ENCODE measurements at regions of chr1 and their contacts with region 1.

Region 1: GRCh38 chr1:64553281-64553680 is 83.4 kb downstream of the CACHD1 start:
- DNase-seq: peak; percentile 5
- ATAC-seq: no peak
- H3K4me3 ChIP-seq: no peak overlapping the region
- H3K27ac ChIP-seq: no peak overlapping the region
- H3K4me1 ChIP-seq: no peaks in the 10 kb centered on the region
- H3K27me3 ChIP-seq: peaks cover 0 to 6% of the 10 kb centered on the region in 2 experiments; a peak in 2 of 5 replicates
- CTCF ChIP-seq: peak; percentile 30
- EP300 ChIP-seq: no peak
- POLR2A ChIP-seq: no peak
- RAD21 ChIP-seq: no peak

Region 2: DNA sequence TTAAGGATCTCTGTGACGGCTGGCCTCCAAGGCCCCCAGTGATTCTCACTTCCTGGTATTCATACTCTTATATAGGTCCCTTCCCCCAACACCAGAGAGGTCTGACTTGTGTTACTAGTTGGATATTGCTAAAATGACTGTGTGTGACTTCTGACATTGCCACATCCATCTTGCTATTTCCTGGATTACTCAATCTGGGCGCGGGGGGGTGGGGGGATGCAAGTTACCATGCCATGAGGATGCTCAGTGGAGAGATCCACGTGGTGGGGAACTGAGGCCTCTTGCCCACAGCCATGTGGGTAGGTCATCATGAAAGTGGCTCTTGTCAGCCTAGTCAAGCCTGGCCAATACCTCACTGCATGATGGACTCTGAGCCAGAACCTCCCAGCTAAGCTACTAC is 232.8 kb before region 1 on chr1:
- CTCF ChIA-PET with region 1: no interaction called
- POLR2A ChIA-PET with region 1: no interaction called
- in situ Hi-C with region 1: no loop called
- intact Hi-C with region 1: no loop called
- DNase-seq: no peak
- ATAC-seq: no peak
- H3K4me3 ChIP-seq: no peak overlapping the region
- H3K27ac ChIP-seq: no peak overlapping the region
- H3K4me1 ChIP-seq: no peaks in the 10 kb centered on the region
- H3K27me3 ChIP-seq: no peaks in the 10 kb centered on the region
- CTCF ChIP-seq: no peak
- EP300 ChIP-seq: no peak
- POLR2A ChIP-seq: no peak
- RAD21 ChIP-seq: no peak

Region 3: DNA sequence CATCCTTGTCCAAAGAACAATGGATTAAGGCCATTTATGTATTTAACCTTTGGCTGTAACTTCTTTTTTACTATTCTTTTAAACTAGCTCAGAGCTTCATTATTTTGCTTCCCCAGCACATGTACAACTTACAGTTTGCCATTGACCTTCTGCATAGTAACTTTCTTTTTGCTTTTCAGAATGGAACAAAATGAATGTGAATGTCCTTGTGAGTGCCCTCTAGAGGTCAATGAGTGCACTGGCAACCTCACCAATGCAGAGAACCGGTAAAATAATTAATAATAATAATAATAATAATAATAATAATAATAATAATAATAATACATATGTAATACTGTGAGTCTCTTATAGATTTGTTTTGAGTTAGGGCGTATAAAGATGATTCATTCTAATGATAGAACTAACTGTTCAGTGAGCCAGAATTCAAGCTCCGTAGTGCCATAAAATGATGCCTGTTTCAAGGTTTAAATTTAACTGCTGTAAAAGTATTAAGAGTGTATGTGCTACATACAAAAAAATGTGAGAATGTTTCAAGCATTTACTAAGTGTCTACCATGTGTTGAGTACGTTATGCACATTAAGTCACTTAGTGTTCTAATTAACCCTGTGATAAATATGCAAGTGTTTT is 122.6 kb after region 1 on chr1:
- CTCF ChIA-PET with region 1: no interaction called
- POLR2A ChIA-PET with region 1: no interaction called
- in situ Hi-C with region 1: no loop called
- intact Hi-C with region 1: loop called (anchors 5 kb)
- DNase-seq: peak; percentile 3
- ATAC-seq: no peak
- H3K4me3 ChIP-seq: no peak overlapping the region
- H3K27ac ChIP-seq: no peak overlapping the region
- H3K4me1 ChIP-seq: no peaks in the 10 kb centered on the region
- H3K27me3 ChIP-seq: peaks cover 1 to 3% of the 10 kb centered on the region in 2 experiments; a peak in 1 of 5 replicates
- CTCF ChIP-seq: peak; percentile 43; the same call in 1 of the 2 replicates
- EP300 ChIP-seq: no peak
- POLR2A ChIP-seq: no peak
- RAD21 ChIP-seq: no peak

Measured in HepG2 (cell line).